ENCODE measurements at regions of chr17 and their contacts with region 1.

Region 1: DNA sequence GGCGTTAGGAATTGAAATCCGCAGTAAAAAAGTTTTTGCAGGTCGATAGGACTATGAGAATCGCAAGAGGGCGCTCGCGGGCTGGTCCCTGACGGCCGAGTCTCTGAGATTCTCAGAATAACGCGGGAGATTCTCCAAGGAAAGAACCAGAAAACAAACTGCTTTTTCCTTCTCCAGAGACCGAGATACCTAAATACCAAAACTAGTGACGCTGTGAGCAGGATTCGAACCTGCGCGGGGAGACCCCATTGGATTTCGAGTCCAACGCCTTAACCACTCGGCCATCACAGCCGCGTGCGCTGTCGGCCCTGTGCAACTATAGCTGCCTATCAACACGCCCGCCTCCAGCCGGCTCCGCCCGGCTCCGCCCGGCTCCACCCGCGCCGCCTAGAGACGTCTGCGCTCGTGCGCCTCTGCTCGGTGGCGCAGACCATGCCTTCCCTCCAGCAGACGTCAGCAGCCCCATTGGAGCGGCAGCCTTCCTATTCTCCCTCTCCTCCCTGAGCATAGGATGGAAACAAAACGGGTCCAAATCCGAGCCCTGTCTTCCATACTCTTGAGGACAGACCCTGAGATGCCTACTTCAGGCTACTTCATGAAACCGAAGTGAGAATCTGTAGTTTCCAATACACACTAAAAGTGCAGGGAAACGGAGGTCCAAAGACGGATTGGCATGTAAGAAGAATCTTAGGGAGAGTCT is 13.4 kb downstream of the PER1 start:
- DNase-seq: peak; percentile 97
- H3K4me3 Mint-ChIP-seq: no peak overlapping the region
- H3K27ac Mint-ChIP-seq: no peak overlapping the region
- H3K4me1 Mint-ChIP-seq: peaks cover 3% of the 10 kb centered on the region
- H3K27me3 Mint-ChIP-seq: peaks cover 3% of the 10 kb centered on the region

Region 2: GRCh38 chr17:8103549-8103948 is 35.3 kb before region 1 on chr17:
- CTCF ChIA-PET with region 1: no interaction called
- POLR2A ChIA-PET with region 1: no interaction called
- DNase-seq: no peak
- H3K4me3 Mint-ChIP-seq: no peak overlapping the region
- H3K27ac Mint-ChIP-seq: no peak overlapping the region
- H3K4me1 Mint-ChIP-seq: peaks cover 8% of the 10 kb centered on the region
- H3K27me3 Mint-ChIP-seq: peaks cover 4% of the 10 kb centered on the region

Region 3: GRCh38 chr17:8125157-8125946 is 13.5 kb before region 1 on chr17:
- CTCF ChIA-PET with region 1: interaction called, 66 read pairs
- POLR2A ChIA-PET with region 1: interaction called, 23 read pairs
- DNase-seq: peak; percentile 86
- H3K4me3 Mint-ChIP-seq: peak overlapping the region; percentile 93
- H3K27ac Mint-ChIP-seq: peak overlapping the region; percentile 71
- H3K4me1 Mint-ChIP-seq: peaks cover 58% of the 10 kb centered on the region
- H3K27me3 Mint-ChIP-seq: peaks cover 51% of the 10 kb centered on the region

Region 4: GRCh38 chr17:8156246-8156992 is 17.6 kb after region 1 on chr17:
- CTCF ChIA-PET with region 1: interaction called, 24 read pairs
- POLR2A ChIA-PET with region 1: interaction called, 62 read pairs
- DNase-seq: peak; percentile 100
- H3K4me3 Mint-ChIP-seq: no peak overlapping the region
- H3K27ac Mint-ChIP-seq: no peak overlapping the region
- H3K4me1 Mint-ChIP-seq: peaks cover 51% of the 10 kb centered on the region
- H3K27me3 Mint-ChIP-seq: no peaks in the 10 kb centered on the region

Region 5: GRCh38 chr17:8189711-8190477 is 51.1 kb after region 1 on chr17 and contains the start of gene BORCS6:
- CTCF ChIA-PET with region 1: interaction called, 5 read pairs
- POLR2A ChIA-PET with region 1: interaction called, 10 read pairs
- DNase-seq: peak; percentile 97
- H3K4me3 Mint-ChIP-seq: no peak within 1 kb of the TSS
- H3K27ac Mint-ChIP-seq: no peak within 1 kb of the TSS
- H3K4me1 Mint-ChIP-seq: peaks cover 13% of the 10 kb centered on the region
- H3K27me3 Mint-ChIP-seq: no peaks in the 10 kb centered on the region
- total RNA-seq, gene BORCS6: 16.3 to 17.0 TPM

Region 6: DNA sequence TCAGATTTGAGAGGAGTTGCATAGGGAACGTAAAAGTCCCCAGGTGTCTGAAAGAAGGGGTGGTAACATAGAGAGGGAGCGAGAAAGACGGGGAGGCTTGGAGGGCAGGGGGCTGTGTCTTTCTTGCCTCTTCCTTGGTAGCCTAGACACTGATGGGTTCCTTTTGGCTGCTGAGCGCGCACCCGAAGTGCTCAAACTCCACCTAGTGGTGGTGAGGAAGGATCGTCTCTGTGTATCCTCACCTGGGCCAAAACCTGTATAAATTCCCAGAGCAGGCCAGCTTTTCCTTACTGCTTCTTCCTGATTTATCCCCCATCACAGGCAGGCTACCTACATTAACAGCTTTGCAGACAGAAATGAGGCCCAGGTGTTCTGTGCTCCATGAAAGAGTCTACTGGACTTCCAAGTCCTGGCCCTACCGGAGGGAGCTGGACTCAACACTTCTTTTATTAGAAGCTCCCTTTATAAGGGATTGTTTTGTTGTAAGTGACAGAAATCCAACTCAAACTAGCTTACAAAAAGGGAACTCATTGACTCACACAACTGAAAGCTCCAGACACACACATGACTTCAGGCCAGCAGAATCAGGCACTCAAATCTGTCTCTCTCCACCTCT is 161.9 kb after region 1 on chr17:
- CTCF ChIA-PET with region 1: interaction called, 11 read pairs
- POLR2A ChIA-PET with region 1: interaction called, 3 read pairs
- DNase-seq: peak; percentile 68
- H3K4me3 Mint-ChIP-seq: no peak overlapping the region
- H3K27ac Mint-ChIP-seq: no peak overlapping the region
- H3K4me1 Mint-ChIP-seq: peaks cover 20% of the 10 kb centered on the region
- H3K27me3 Mint-ChIP-seq: no peaks in the 10 kb centered on the region